GM12878 (cell line): ENCODE measurements at regions of chr3 and their contacts with region 1.

Region 1: DNA sequence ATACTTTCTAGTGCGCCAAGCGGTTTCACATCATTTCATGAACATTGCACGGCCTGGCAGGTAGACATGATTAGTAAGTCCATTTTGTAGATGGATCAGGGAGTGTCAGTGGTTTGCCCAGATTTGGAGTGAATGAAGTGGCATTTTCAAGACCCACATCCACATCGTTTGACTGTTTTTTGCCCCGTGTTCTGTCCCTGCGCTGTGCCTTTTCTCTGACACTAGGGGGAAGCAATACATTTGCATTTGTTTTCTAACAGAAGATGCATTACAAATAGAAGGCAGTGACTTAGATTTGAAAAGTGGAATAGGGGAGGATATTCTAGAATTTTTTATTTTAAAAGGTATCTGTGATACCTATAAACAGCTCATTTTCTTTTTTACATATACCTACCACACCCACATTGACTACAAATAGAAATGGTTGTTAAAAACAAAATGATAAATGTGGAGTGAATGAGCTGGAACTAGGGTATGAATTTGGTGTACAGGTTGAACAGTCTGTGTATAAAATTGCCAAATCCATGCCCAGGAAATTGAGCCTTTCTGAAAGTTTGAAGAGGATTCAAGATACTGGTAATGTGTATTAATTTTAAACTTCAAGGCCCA is 98.0 kb downstream of the USP13 start:
- DNase-seq: no peak
- ATAC-seq: peak; percentile 68
- H3K4me3 ChIP-seq: no peak overlapping the region
- H3K27ac ChIP-seq: no peak overlapping the region
- H3K4me1 ChIP-seq: no peaks in the 10 kb centered on the region
- H3K27me3 ChIP-seq: no peaks in the 10 kb centered on the region
- CTCF ChIP-seq: peak; percentile 51 to 56 (median 55)
- EP300 ChIP-seq: no peak
- POLR2A ChIP-seq: no peak
- RAD21 ChIP-seq: peak; percentile 71

Region 2: DNA sequence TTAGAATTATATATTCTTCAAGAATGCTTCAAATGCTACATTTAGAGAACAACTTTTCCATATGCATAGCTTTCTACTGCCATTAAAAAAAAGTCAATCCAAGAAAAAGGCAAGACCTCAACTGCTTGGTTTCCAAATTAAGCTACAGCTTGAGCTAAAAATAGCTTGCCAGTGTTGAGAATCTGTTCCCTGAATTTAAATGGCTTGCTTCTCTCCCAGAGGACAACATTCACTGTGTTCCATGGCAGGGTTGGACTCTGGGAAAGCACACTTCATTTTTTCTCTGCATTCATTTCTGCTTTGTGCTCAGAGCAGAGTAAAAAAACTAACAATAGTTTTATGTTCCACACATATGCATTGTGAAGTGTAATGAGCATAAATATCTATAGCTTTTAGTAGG is 238.4 kb before region 1 on chr3:
- CTCF ChIA-PET with region 1: no interaction called
- POLR2A ChIA-PET with region 1: no interaction called
- RAD21 ChIA-PET with region 1: no interaction called
- SMC1A ChIA-PET with region 1: no interaction called
- in situ Hi-C with region 1: no loop called
- intact Hi-C with region 1: no loop called
- DNase-seq: no peak
- ATAC-seq: no peak
- H3K4me3 ChIP-seq: no peak overlapping the region
- H3K27ac ChIP-seq: no peak overlapping the region
- H3K4me1 ChIP-seq: no peaks in the 10 kb centered on the region
- H3K27me3 ChIP-seq: no peaks in the 10 kb centered on the region
- CTCF ChIP-seq: no peak
- EP300 ChIP-seq: no peak
- POLR2A ChIP-seq: no peak
- RAD21 ChIP-seq: no peak

Region 3: DNA sequence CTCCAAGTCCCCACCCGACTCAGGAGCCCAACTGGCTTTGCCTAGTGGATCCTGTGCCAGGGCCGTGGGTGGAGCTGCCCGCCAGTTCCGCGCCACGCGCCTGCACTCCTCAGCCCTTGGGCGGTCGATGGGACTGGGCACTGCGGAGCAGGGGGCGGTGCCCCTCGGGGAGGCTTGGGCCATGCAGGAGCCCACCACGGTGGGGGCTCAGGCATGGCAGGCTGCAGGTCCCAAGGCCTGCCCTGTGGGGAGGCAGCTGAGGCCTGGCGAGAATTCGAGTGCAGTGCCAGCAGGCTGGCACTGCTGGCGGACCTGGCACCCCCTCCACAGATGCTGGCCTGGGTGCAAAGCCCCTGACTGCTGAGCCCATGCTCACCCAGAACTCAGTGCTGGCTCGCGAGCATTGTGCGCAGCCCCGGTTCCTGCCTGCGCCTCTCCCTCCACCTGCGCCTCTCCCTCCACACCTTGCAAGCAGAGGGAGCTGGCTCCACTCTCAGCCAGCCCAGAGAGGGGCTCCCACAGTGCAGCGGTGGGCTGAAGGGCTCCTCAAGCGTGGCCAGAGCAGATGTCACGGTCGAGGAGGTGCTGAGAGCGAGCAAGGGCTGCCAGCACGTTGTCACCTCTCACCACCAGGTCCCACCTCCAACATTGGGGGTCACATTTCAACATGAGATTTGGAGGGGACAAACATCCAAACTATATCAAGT is 24.7 kb after region 1 on chr3:
- CTCF ChIA-PET with region 1: no interaction called
- POLR2A ChIA-PET with region 1: no interaction called
- RAD21 ChIA-PET with region 1: no interaction called
- SMC1A ChIA-PET with region 1: no interaction called
- in situ Hi-C with region 1: no loop called
- intact Hi-C with region 1: loop called (anchors 2 kb)
- DNase-seq: no peak
- ATAC-seq: no peak
- H3K4me3 ChIP-seq: no peak overlapping the region
- H3K27ac ChIP-seq: no peak overlapping the region
- H3K4me1 ChIP-seq: no peaks in the 10 kb centered on the region
- H3K27me3 ChIP-seq: no peaks in the 10 kb centered on the region
- CTCF ChIP-seq: no peak
- EP300 ChIP-seq: no peak
- POLR2A ChIP-seq: no peak
- RAD21 ChIP-seq: no peak

Region 4: GRCh38 chr3:179801263-179801662 is 50.4 kb after region 1 on chr3:
- CTCF ChIA-PET with region 1: no interaction called
- POLR2A ChIA-PET with region 1: no interaction called
- RAD21 ChIA-PET with region 1: no interaction called
- SMC1A ChIA-PET with region 1: no interaction called
- in situ Hi-C with region 1: no loop called
- intact Hi-C with region 1: no loop called
- DNase-seq: no peak
- ATAC-seq: no peak
- H3K4me3 ChIP-seq: no peak overlapping the region
- H3K27ac ChIP-seq: no peak overlapping the region
- H3K4me1 ChIP-seq: no peaks in the 10 kb centered on the region
- H3K27me3 ChIP-seq: no peaks in the 10 kb centered on the region
- CTCF ChIP-seq: no peak
- EP300 ChIP-seq: no peak
- POLR2A ChIP-seq: no peak
- RAD21 ChIP-seq: no peak